ENCODE measurements at regions of chr6 and their contacts with region 1.

Region 1: GRCh38 chr6:150334790-150335783 is 33.7 kb upstream of the IYD start:
- DNase-seq: peak; percentile 52
- CTCF ChIP-seq: peak; percentile 44

Region 2: DNA sequence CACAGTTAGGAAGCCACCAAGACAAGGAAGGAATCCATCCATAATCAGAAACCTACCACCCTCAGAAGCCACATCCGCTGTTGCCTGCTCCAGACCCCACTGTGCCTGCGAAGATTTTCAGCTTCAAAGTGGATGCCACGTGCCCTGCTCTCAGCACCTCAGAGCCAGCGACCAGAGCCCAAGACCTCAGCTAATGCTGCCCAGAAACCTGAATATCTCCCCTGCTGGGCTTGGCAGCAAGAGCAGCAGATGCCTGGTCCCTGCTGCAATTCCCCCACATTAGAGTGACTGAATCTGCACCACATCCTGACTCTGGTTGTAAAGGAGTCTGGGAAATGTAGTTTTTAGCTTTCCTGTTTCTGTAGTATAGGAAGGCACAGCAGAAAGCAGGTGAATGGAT is 255.5 kb before region 1 on chr6:
- in situ Hi-C with region 1: loop called (anchors 10 kb)
- DNase-seq: no peak
- CTCF ChIP-seq: no peak

Region 3: DNA sequence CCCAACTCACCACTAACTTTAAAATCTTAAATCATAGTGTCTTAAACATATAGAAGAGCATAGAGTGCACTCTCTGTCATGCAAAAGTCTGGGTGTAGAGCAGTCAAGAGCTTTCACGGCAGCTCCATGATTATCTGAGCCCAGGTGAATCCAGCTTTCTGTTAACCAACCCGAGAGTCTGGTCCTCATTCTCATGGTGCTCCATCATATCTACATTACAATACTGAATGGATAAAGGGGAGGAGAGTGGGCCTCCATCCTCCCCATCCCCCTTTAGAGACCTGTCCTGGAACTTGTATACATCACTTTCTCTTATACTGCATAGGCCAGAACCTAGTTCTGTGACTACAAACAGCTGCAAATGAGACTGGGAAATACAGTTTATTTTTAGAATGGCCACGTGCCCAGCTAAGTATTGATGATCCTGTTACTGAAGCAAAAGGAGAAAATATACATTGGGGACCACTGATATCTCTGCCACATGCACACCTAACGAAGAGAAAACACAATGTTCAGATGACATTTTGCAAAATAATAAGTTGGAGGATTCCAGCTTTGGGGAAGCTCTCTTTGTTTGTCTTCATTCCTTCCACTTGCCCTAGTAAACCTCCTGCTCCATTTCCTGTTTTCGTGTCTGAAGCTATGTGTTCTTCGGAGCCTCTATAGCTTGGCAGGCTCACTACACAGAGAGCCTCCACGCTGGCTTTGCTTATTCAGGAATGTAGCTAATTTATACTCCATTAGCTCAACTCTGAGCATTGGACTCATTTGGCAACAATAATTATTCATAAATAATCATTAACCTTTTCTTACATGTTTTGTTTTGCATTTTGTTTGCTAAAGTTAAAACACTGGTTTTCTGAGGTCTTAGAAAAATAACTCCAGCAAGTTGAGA is 143.8 kb after region 1 on chr6:
- in situ Hi-C with region 1: no loop called
- DNase-seq: no peak
- CTCF ChIP-seq: no peak

Region 4: DNA sequence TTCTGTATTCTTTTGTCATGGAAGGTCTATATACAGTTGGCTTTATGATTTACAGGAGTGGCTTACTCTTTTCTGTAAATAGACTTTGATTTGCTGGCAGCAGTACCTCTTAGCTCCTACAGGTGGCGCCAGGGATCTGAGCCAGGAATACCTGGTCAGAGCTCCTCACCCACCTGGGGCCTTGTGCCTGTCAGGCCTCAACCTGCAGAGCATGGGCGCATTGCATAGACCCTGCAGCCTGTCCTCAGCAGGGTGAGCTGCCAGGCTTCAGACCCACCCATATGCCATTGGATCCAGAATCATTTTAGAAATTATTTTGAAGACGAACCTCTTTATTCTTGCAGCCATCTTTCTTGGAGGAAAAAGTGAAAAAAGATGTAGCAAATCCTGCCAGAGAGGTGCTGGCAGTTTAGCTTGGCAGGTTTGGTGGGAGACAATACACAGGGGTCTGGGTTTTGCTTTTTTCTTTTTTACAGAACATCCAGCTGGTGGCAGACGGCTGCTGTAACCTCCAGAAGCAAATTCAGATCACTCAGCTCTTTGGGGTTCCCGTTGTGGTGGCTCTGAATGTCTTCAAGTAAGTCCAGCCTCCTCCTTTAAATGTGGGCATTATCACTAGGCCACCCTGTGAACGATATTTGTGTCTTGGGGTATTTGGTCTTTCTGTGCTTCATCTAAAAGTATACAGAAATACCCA is 679.5 kb after region 1 on chr6:
- in situ Hi-C with region 1: no loop called
- DNase-seq: peak; percentile 66
- CTCF ChIP-seq: peak; percentile 93

Measured in GM13976 (cell line).